PC-9 (cell line): ENCODE measurements at regions of chr11 and their contacts with region 1.

Region 1: GRCh38 chr11:130478204-130478701 is 29.8 kb downstream of the ADAMTS15 start:
- DNase-seq: peak; percentile 72 to 75
- H3K4me3 ChIP-seq: peak overlapping the region; percentile 10; the same call in 1 of the 2 replicates
- H3K27ac ChIP-seq: peak overlapping the region; percentile 70
- H3K4me1 ChIP-seq: peaks cover 28% of the 10 kb centered on the region
- H3K27me3 ChIP-seq: no peaks in the 10 kb centered on the region
- CTCF ChIP-seq: no peak

Region 2: DNA sequence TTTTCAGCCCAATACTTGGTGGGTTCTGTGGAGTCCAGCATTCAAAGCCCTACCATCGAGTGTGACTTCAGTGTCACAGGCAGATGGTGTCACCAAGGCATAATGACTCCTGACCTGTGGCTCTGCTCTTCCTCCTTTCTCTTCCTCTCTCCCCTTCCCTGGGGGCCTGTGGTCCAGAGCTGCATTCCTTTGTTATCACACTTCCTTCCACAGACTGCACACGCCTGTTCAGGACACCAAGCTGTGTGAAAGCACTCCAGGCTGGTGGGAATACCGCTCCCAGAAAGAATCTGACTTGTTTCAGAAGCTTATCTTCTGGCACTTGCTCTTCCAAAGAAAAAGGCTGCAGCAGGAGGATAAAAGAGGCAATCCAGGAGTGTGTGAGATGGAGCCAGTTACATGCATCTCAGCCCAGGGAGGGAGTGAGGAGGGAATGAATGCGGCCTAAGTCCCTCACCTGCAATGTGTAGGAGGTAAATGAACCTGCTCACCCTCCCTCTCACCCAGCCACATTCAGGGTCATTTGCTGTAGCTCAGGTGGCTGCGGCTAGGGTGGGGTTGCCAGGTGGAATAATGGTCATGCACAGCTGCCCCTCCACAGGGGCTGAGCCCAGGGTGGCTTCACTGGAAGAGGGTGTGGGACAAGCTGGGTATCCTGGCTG is 49.5 kb after region 1 on chr11:
- CTCF ChIA-PET with region 1: no interaction called
- POLR2A ChIA-PET with region 1: no interaction called
- intact Hi-C with region 1: loop called (anchors 5 kb)
- DNase-seq: peak; percentile 50 to 70
- H3K4me3 ChIP-seq: no peak overlapping the region
- H3K27ac ChIP-seq: peak overlapping the region; percentile 55
- H3K4me1 ChIP-seq: peaks cover 48% of the 10 kb centered on the region
- H3K27me3 ChIP-seq: no peaks in the 10 kb centered on the region
- CTCF ChIP-seq: no peak

Region 3: DNA sequence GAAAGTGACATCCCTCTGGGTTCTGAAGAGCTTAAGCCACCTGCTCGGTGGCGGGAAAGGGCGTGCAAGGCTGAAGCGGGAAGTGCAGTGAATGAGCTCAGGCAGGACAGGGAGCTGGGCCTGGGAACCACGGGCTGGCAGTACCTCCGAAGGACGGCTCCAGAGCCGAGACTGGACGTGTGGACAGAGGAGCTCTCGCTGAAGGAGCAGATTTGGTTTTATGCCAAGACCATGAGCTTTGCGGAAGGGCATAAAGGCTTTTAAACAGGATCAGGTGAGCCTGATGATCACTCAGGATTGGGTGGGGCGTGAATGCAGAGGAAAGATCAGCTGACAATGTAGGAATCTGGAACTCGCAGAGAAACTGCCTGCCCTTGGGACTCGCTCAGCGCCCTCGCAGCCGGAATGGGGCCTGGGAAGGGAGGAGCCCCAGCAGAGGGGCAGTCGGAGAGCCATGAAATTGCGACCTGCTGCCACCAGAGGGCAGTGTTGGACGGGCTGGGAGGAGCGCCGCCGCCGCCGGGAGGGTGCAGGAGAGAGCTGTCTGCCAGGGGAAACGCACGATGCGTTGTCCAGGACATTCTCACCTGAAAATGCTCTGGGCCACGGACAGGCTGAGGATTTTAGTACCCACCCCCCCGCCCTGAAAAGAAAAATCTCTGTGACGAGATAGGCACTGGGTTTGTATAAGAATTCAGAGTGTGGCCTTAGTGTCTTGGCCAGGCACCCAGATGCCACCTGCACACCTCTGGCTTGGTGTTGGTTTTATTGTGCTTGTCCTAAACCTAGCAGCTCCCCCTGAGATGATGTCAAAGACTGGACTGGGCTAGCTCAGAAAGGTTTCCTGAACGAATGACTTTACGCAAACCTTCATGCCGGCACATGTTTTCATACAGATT is 1216.5 kb after region 1 on chr11:
- CTCF ChIA-PET with region 1: interaction called, 10 read pairs
- POLR2A ChIA-PET with region 1: no interaction called
- intact Hi-C with region 1: no loop called
- DNase-seq: peak in 1 of 2 experiments; percentile 61
- H3K4me3 ChIP-seq: no peak overlapping the region
- H3K27ac ChIP-seq: no peak overlapping the region
- H3K4me1 ChIP-seq: no peaks in the 10 kb centered on the region
- H3K27me3 ChIP-seq: peaks cover 9% of the 10 kb centered on the region; the same call in 1 of the 2 replicates
- CTCF ChIP-seq: peak; percentile 75